ENCODE measurements at regions of chr13 and their contacts with region 1.

Region 1: DNA sequence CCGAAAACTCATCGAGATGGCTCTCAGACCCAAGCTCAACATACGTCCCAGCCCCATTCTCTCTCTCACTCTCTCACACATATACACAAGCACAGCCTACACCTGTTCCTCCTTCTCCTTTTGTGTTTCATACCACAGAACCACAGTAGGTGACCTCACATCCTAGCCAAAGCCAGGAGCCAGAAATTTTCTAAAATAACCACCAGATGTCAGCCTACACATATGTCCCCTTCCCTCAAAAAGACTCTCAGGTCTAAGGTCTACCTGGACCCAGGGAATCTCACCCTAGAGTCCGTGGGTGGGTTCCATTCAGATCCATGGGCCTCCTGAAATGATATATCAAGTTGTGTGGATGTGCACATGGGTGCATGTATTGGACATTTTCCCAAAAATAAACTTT is 104.2 kb upstream of the IPO5 start:
- DNase-seq: peak; percentile 24
- H3K4me3 ChIP-seq: no peak overlapping the region
- H3K27ac ChIP-seq: no peak overlapping the region
- H3K4me1 ChIP-seq: no peaks in the 10 kb centered on the region
- CTCF ChIP-seq: peak; percentile 56

Region 2: GRCh38 chr13:98429977-98430736 is 580.9 kb after region 1 on chr13:
- CTCF ChIA-PET with region 1: no interaction called
- POLR2A ChIA-PET with region 1: no interaction called
- intact Hi-C with region 1: loop called (anchors 5 kb)
- DNase-seq: no peak
- H3K4me3 ChIP-seq: no peak overlapping the region
- H3K27ac ChIP-seq: no peak overlapping the region
- H3K4me1 ChIP-seq: no peaks in the 10 kb centered on the region
- CTCF ChIP-seq: no peak

Measured in OCI-LY7 (cell line).